ENCODE measurements at regions of chr13 and their contacts with region 1.

Region 1: GRCh38 chr13:49098771-49099512 is 121.2 kb upstream of the MLNR start:
- DNase-seq: no peak
- ATAC-seq: no peak
- H3K4me3 ChIP-seq: peak overlapping the region; percentile 36; the same call in 1 of the 2 replicates
- H3K27ac ChIP-seq: peak overlapping the region; percentile 100
- H3K4me1 ChIP-seq: peaks cover 30% of the 10 kb centered on the region
- H3K27me3 ChIP-seq: no peaks in the 10 kb centered on the region
- CTCF ChIP-seq: peak; percentile 70

Region 2: GRCh38 chr13:49052776-49053175 is 46.2 kb before region 1 on chr13:
- CTCF ChIA-PET with region 1: no interaction called
- POLR2A ChIA-PET with region 1: no interaction called
- intact Hi-C with region 1: no loop called
- DNase-seq: no peak
- ATAC-seq: no peak
- H3K4me3 ChIP-seq: no peak overlapping the region
- H3K27ac ChIP-seq: no peak overlapping the region
- H3K4me1 ChIP-seq: no peaks in the 10 kb centered on the region; the same call in 1 of the 2 replicates
- H3K27me3 ChIP-seq: no peaks in the 10 kb centered on the region
- CTCF ChIP-seq: no peak

Region 3: DNA sequence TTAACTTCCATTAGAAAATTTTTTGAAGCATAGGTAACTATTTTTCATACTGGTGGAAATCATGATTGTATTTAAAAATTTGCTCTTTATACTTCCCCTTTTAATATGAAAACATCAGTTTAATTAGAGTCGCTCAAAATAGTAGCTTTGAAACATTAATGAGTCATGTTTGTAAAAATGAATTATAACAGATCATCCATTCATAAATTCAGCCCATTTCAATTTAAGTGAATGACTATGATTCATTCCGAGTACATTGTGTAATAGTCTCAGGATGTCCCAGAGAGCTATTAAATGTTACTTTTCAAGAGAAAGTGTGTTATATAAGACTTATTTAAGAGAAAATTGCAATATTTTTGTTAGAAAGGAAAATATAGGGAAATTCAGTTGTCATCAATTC is 12.2 kb before region 1 on chr13:
- CTCF ChIA-PET with region 1: no interaction called
- POLR2A ChIA-PET with region 1: interaction called, 5 read pairs
- intact Hi-C with region 1: loop called (anchors 1 kb)
- DNase-seq: peak; percentile 78
- ATAC-seq: peak; percentile 90
- H3K4me3 ChIP-seq: no peak overlapping the region
- H3K27ac ChIP-seq: peak overlapping the region; percentile 88
- H3K4me1 ChIP-seq: peaks cover 16% of the 10 kb centered on the region
- H3K27me3 ChIP-seq: no peaks in the 10 kb centered on the region
- CTCF ChIP-seq: no peak

Region 4: GRCh38 chr13:49110122-49110912 is 11.4 kb after region 1 on chr13:
- CTCF ChIA-PET with region 1: no interaction called
- POLR2A ChIA-PET with region 1: no interaction called
- intact Hi-C with region 1: loop called (anchors 1 kb)
- DNase-seq: peak; percentile 69
- ATAC-seq: peak; percentile 54; the same call in 1 of the 2 replicates
- H3K4me3 ChIP-seq: peak overlapping the region; percentile 81
- H3K27ac ChIP-seq: peak overlapping the region; percentile 57
- H3K4me1 ChIP-seq: peaks cover 19% of the 10 kb centered on the region
- H3K27me3 ChIP-seq: no peaks in the 10 kb centered on the region
- CTCF ChIP-seq: no peak

Region 5: DNA sequence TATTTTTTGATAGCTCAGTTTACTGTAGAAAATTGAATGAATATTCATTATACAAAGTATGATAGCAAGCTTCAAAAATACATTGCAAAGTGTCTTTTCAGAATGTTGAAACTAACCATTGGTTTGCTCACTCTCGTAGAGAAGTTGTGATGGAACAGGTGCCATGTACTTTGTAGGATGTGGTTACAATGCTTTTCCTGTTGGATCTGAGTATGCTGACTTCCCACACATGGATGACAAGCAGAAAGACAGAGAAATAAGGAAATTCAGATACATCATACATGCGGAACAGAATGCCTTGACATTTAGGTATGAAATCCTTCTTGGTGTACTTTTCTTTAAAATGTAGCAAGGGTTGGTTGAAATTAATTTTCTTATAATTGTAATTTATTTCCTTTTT is 179.3 kb after region 1 on chr13:
- CTCF ChIA-PET with region 1: interaction called, 8 read pairs
- POLR2A ChIA-PET with region 1: no interaction called
- intact Hi-C with region 1: loop called (anchors 1 kb)
- DNase-seq: no peak
- ATAC-seq: no peak
- H3K4me3 ChIP-seq: no peak overlapping the region
- H3K27ac ChIP-seq: no peak overlapping the region
- H3K4me1 ChIP-seq: no peaks in the 10 kb centered on the region
- H3K27me3 ChIP-seq: no peaks in the 10 kb centered on the region
- CTCF ChIP-seq: no peak

Measured in PC-3 (cell line).